ENCODE measurements at regions of chr7 and their contacts with region 1.

Region 1: DNA sequence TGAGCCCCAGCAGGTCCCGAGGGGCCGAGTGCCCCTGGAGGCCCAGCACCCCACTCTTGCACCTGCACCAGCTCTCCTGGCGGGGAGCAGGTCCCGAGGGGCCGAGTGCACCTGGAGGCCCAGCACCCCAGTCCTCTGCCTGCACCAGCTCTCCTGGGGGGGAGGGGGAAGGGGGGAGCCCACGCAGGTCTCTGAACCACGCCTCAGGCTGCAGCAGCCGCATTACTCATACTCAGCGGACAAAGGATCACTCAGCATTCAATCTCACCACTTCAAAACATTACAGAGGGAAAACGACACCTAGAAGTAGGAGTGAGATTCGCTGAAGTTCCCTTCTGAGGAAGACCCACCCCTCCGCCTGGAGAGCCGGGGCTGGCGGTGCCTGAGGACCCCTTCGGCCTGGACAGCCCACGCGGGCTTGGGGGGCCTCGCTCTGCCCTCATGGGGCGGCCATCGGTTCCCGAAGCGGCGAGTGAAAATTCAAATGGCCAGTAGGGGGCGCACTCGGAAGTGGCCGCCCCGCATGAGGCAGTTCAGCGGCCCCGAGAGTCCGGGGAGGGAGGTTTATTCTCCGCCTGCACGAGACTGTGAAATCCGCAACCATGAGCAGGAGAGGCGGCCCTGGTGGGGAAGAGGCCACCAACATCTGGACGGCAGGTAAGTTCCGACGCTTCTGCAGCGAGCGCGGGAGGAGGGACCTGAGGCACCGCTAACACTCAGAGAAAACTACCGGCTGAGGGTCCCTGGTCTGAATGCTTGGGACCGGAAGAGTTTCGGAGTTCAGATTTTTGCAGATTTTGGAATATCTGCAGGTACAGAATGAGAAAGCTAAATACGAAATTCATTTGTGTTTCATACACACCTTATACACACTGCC is 1.1 kb upstream of the GPER1 start:
- DNase-seq: peak; percentile 73
- H3K4me3 Mint-ChIP-seq: peak overlapping the region; percentile 81
- H3K27ac Mint-ChIP-seq: no peak overlapping the region
- H3K4me1 Mint-ChIP-seq: peaks cover 22% of the 10 kb centered on the region
- H3K27me3 Mint-ChIP-seq: no peaks in the 10 kb centered on the region
- CTCF ChIP-seq: peak; percentile 83

Region 2: GRCh38 chr7:604001-604883 is 482.6 kb before region 1 on chr7:
- CTCF ChIA-PET with region 1: no interaction called
- POLR2A ChIA-PET with region 1: no interaction called
- intact Hi-C with region 1: no loop called
- DNase-seq: peak; percentile 52
- H3K4me3 Mint-ChIP-seq: no peak overlapping the region
- H3K27ac Mint-ChIP-seq: no peak overlapping the region
- H3K4me1 Mint-ChIP-seq: no peaks in the 10 kb centered on the region
- H3K27me3 Mint-ChIP-seq: no peaks in the 10 kb centered on the region
- CTCF ChIP-seq: no peak

Region 3: DNA sequence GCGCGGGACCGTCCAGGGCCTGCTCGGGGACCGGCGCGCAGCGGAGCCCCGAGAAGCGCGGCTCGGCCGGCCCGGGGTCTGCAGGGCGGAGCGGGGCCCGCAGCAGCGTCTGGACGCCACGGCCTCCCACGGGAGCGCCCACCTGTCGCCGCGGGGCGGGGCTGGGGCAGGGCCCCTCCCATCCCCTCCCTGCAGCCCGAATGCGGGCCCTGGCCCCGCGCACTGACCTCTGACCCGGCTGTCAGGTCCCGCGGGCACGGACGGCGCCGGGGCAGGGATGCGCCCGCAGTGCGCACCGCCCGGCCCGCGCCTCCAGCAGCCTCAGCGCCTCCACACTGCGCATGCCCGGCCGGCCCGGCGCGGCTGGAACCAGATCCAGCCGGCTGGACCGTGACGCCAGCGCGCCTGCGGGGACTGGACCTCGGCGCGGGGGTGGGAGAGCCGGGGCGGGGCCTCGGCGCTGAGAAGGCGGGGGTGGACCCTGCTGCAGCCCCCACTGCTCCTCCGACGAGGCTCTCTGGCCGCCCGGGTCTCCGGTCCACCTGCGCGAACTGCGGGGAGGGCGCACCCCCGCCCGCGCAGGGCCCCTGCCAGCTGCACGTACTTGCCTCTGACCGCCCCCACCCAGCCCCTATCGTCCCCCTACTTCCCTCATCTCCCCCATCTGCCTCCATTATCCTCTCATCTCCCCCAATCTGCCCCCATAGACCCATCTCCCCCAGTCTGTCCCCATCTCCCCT is 58.6 kb before region 1 on chr7:
- CTCF ChIA-PET with region 1: no interaction called
- POLR2A ChIA-PET with region 1: no interaction called
- intact Hi-C with region 1: no loop called
- DNase-seq: peak; percentile 90
- H3K4me3 Mint-ChIP-seq: peak overlapping the region; percentile 75
- H3K27ac Mint-ChIP-seq: peak overlapping the region; percentile 59
- H3K4me1 Mint-ChIP-seq: peaks cover 17% of the 10 kb centered on the region
- H3K27me3 Mint-ChIP-seq: no peaks in the 10 kb centered on the region
- CTCF ChIP-seq: no peak

Region 4: DNA sequence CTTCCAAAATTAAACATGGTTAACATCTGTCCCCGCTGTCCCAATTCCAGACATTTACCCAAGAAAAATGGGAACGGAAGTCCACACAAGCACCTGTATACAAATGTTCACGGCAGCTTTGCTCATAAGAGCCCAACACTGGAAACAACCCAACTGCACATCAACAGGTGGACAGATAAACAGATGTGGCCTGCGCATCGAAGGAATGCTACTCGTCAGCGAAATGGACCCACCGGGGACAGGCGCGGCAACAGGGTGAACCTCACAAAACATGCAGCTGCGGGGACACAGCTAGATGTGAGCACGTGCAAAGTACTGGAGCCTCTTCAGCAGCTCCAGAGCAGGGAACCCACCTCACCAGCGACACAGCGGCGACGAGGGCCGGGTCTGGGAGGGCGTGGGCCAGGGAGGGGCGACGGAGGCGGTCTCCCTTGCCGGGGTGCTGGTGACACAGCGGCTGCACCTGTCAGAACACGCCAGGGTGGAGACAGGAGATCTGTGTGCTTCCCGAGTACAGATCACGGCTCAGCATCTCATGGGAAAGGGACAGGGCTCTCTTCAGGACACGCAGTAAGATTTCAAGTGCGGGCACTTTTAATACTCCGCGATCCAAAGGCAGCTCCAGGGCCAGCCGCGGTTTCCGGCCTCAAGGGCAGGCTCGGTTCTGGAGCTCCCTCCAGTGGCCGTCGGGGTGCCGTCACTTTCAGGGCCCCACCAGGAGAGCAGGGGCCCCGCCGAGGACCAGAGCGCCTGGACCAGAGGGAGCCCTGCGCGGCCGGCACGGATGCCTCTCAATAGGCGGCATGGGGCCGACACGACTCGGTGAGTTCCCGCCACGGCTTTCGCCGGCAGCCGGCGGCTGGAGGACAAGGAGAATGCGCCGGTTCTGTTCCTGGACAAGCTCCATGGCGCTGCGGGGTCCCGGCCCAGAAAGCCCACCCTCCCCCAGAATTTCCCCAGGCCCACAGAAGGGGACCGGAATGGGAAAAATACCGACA is 21.3 kb before region 1 on chr7:
- CTCF ChIA-PET with region 1: interaction called, 17 read pairs
- POLR2A ChIA-PET with region 1: no interaction called
- intact Hi-C with region 1: no loop called
- DNase-seq: peak; percentile 72
- H3K4me3 Mint-ChIP-seq: no peak overlapping the region
- H3K27ac Mint-ChIP-seq: no peak overlapping the region
- H3K4me1 Mint-ChIP-seq: no peaks in the 10 kb centered on the region
- H3K27me3 Mint-ChIP-seq: no peaks in the 10 kb centered on the region
- CTCF ChIP-seq: peak; percentile 82

Region 5: DNA sequence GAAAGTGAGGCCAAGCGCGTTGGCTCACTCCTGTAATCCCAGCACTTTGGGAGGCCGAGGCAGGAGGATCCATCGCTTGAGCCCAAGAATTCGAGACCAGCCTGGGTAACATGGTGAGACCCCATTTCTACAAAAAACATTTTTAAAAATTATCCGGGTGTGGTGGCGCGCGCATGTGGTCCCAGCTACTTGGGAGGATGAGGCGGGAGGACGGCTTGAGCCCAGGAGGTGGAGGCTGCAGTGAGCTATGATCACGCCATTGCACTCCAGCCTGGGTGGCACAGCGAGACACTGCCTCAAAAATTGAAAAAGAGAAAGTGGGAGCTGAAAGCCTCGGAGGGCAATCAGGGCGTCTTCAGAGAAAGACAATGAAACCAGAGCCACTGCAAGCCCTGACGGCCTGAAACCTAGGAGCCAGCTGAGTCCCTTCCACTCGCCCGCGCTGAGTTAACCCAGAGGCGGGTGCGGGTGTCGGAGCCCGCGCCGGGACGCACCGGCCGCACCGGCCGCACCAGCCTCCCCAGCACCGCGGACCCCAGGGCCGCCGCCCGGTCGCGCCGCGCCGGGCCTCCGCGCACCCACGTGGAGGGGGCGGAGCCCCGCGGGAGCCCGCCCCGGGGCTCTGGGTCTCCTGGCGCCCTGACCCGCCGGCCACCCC is 50.8 kb after region 1 on chr7:
- CTCF ChIA-PET with region 1: interaction called, 6 read pairs
- POLR2A ChIA-PET with region 1: interaction called, 5 read pairs
- intact Hi-C with region 1: loop called (anchors 5 kb)
- DNase-seq: no peak
- H3K4me3 Mint-ChIP-seq: peak overlapping the region; percentile 74
- H3K27ac Mint-ChIP-seq: peak overlapping the region; percentile 94
- H3K4me1 Mint-ChIP-seq: peaks cover 11% of the 10 kb centered on the region
- H3K27me3 Mint-ChIP-seq: no peaks in the 10 kb centered on the region
- CTCF ChIP-seq: no peak

Region 6: DNA sequence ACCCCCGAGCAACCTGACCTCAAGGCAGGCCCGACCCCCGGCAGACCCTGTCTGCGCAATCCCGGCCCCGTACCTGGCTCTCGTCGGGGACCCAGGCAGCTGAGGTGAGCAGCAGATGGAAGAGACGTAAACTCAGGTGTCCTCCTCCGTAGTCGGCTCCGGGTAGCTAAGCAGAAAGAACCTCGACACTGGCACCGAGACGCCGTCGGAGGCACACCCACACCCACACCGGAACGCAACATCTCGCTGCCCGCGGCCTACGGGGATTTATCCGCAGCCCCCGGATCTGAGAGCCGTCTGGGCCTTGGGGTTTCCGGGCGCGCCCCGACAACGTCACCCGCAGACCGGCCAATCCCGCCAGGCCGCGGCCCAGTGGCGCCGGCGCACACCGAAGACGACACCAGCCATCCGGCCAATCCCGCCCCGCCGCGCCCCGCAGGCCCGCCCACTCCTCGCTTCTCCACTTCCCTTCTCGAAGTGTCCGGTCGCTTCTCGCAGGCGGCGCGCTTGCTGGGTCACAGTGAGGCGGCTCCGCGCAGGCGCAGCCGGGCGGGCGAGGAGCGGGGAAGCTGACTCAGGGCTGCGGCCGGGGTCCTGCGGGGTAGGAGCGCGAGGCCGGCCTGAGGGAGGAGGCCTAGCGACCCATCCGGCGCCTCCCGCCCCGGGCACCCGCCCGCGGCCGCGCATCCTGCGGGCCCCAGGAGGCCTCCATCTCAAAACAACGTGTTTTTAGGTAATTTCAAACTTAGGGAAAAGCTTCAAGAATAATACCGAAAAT is 73.3 kb after region 1 on chr7 and contains the start of gene ZFAND2A:
- CTCF ChIA-PET with region 1: no interaction called
- POLR2A ChIA-PET with region 1: interaction called, 5 read pairs
- intact Hi-C with region 1: loop called (anchors 5 kb)
- DNase-seq: peak; percentile 97
- H3K4me3 Mint-ChIP-seq: peak within 1 kb of the TSS; percentile 92
- H3K27ac Mint-ChIP-seq: peak within 1 kb of the TSS; percentile 86
- H3K4me1 Mint-ChIP-seq: peaks cover 9% of the 10 kb centered on the region
- H3K27me3 Mint-ChIP-seq: no peaks in the 10 kb centered on the region
- CTCF ChIP-seq: no peak
- total RNA-seq, gene ZFAND2A: 30.1 and 40.7 TPM in 2 replicates

Region 7: GRCh38 chr7:1175967-1176851 is 89.4 kb after region 1 on chr7:
- CTCF ChIA-PET with region 1: interaction called, 8 read pairs
- POLR2A ChIA-PET with region 1: no interaction called
- intact Hi-C with region 1: loop called (anchors 1 kb)
- DNase-seq: peak; percentile 79
- H3K4me3 Mint-ChIP-seq: peak overlapping the region; percentile 54
- H3K27ac Mint-ChIP-seq: peak overlapping the region; percentile 35
- H3K4me1 Mint-ChIP-seq: peaks cover 5% of the 10 kb centered on the region
- H3K27me3 Mint-ChIP-seq: no peaks in the 10 kb centered on the region
- CTCF ChIP-seq: peak; percentile 93